Sciatic nerve (tissue), 2 donors: ENCODE measurements at regions of chr6 and their contacts with region 1.

Region 1: DNA sequence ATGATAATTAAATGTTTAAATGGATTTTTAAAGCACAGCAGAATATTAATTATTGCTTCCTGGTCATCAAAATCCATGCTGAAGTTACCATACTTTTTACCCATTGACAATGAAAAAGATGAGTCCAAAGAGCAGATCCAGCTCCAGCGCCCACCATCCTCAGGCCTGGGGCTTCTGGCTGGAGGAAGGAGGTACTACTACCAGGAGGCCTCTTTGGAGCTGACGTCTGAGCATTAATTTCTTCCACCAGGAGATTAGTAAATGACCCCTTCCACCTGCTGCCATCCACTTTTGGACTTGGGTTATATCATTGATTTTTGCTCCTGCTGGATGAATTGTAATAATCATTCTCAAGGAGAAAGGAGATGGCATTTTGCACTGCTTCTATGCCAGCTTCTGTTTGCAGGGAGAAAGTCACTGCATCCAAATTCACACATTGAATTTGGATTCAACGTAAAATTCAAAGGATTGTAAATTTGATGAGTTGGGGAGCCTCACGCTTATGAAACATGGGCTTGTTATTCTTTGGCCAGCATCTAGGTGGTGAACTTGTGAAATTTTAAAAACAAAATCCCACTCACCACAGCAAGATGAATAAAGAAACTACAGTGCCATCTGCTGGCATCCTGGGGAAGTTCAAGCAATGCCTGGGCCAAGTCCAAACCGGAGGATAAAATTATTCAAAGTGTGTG is 121.8 kb downstream of the SASH1 start:
- DNase-seq: peak; percentile 84
- ATAC-seq: peak; percentile 87

Region 2: GRCh38 chr6:148179786-148180185 is 284.7 kb before region 1 on chr6:
- intact Hi-C with region 1: loop called (anchors 10 kb)
- DNase-seq: no peak
- ATAC-seq: no peak